Heart left ventricle (tissue), 16 donors: ENCODE measurements at regions of chr10 and their contacts with region 1.

Region 1: GRCh38 chr10:42875792-42876460 is 93.3 kb downstream of the BMS1 start:
- DNase-seq: peak in 2 of 5 donors; percentile 18 to 45
- ATAC-seq: peak in 1 of 4 donors; percentile 50
- H3K4me3 ChIP-seq: no peak overlapping the region
- H3K27ac ChIP-seq: no peak overlapping the region
- H3K4me1 ChIP-seq: peaks cover 0 to 18% (median 8%) of the 10 kb centered on the region in 12 donors
- H3K27me3 ChIP-seq: peaks cover 0 to 28% (median 0%) of the 10 kb centered on the region in 9 donors
- CTCF ChIP-seq: no peak
- POLR2A ChIP-seq: no peak

Region 2: GRCh38 chr10:42795701-42796100 is 80.2 kb before region 1 on chr10:
- intact Hi-C with region 1: no loop called
- DNase-seq: no peak
- ATAC-seq: no peak
- H3K4me3 ChIP-seq: no peak overlapping the region
- H3K27ac ChIP-seq: no peak overlapping the region
- H3K4me1 ChIP-seq: no peaks in the 10 kb centered on the region
- H3K27me3 ChIP-seq: no peaks in the 10 kb centered on the region
- CTCF ChIP-seq: no peak
- POLR2A ChIP-seq: no peak

Region 3: DNA sequence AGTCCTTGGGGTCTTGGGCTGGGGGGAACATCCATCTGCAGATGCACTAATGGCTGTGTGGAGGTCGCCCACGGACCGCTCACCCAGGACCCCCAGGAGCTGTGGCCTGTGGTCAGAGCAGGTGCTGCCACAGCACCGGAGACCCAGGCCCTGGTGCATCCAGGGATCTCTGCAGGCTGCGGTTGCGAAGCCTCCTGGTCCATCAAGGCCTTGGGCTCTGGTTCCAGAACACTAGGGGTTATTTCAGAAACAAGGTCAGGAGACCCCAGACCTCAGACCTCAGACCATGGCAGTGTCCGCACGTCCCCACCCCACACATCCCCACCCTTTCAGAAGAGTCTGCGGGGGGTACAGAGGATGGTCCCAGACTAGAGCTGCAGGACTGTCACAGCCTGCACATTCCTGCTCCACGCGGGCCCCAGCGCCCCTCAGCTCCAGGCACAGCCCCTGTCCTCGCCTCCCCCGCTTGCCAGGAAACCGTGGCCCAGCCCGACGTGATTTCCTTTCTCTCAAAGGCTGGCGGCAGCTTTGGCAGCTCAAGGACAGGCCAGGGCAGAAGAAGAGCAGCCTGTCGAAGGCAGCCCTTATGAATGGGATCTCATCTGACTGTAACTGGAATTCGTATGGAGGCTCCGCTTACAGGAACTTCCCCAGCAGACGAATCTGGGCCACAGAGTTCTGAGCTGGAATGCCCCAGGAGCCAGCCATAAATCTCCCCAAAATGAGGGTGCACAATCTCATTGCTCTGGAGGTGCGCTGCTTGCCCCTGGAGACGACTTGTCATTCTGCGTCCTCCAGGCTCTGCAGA is 64.8 kb after region 1 on chr10:
- intact Hi-C with region 1: loop called in 1 of 10 experiments (anchors 10 kb)
- DNase-seq: peak in 1 of 5 donors; percentile 45
- ATAC-seq: no peak
- H3K4me3 ChIP-seq: no peak overlapping the region
- H3K27ac ChIP-seq: no peak overlapping the region
- H3K4me1 ChIP-seq: no peaks in the 10 kb centered on the region
- H3K27me3 ChIP-seq: peaks cover 0 to 10% (median 0%) of the 10 kb centered on the region in 9 donors
- CTCF ChIP-seq: no peak
- POLR2A ChIP-seq: no peak